Activated CD8-positive, alpha-beta T cell treated with anti-CD3 and anti-CD28 coated beads for 36 hours (primary cell): ENCODE measurements at regions of chr18 and their contacts with region 1.

Region 1: GRCh38 chr18:33210575-33211189 is 229.8 kb downstream of the CCDC178 start:
- DNase-seq: no peak
- ATAC-seq: no peak
- H3K4me3 Mint-ChIP-seq: no peak overlapping the region
- H3K27ac Mint-ChIP-seq: no peak overlapping the region
- H3K4me1 Mint-ChIP-seq: no peaks in the 10 kb centered on the region
- H3K27me3 Mint-ChIP-seq: no peaks in the 10 kb centered on the region
- CTCF ChIP-seq: no peak

Region 2: GRCh38 chr18:33231474-33232317 is 21.0 kb after region 1 on chr18:
- CTCF ChIA-PET with region 1: interaction called, 16 read pairs
- POLR2A ChIA-PET with region 1: no interaction called
- intact Hi-C with region 1: no loop called
- DNase-seq: peak; percentile 68
- ATAC-seq: peak; percentile 77
- H3K4me3 Mint-ChIP-seq: no peak overlapping the region
- H3K27ac Mint-ChIP-seq: no peak overlapping the region
- H3K4me1 Mint-ChIP-seq: no peaks in the 10 kb centered on the region
- H3K27me3 Mint-ChIP-seq: no peaks in the 10 kb centered on the region
- CTCF ChIP-seq: peak; percentile 80